B cell (primary cell): ENCODE measurements at regions of chr19 and their contacts with region 1.

Region 1: DNA sequence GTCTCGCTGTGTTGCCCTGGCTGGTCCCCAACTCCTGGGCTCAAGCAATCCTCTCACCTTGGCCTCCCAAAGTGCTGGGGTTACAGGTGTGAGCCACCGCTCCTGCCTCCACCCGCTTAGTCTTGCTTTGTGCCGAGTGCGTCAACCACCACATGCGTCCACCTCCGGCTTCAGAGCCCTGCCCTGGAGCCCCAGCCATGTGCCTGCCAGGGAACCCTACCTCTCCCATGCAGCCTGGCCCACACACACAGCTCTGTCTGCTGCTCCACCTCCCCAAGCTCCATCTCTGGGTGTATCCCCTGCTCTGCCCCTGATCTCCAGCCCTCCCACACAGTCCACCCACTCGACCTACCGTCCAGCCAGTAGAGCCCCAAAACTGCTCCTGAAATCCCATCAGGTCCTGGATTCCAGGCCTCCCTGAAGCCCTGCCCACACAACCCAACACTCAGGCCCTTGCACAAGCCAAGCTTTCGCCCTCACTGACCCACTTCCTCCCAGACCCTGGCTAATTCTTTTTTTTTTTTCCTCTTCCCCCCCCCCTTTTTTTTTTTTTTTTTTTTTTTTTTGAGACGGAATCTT is 9.6 kb downstream of the CYP2F1 start:
- DNase-seq: no peak
- ATAC-seq: no peak
- H3K4me3 ChIP-seq: no peak overlapping the region
- H3K4me3 Mint-ChIP-seq: no peak overlapping the region
- H3K27ac ChIP-seq: no peak overlapping the region
- H3K27ac Mint-ChIP-seq: no peak overlapping the region
- H3K4me1 ChIP-seq: peaks cover 6 to 16% of the 10 kb centered on the region in 2 donors
- H3K4me1 Mint-ChIP-seq: peaks cover 20% of the 10 kb centered on the region
- H3K27me3 ChIP-seq: peaks cover 0 to 3% (median 0%) of the 10 kb centered on the region in 4 experiments
- H3K27me3 Mint-ChIP-seq: peaks cover 13% of the 10 kb centered on the region
- CTCF ChIP-seq: no peak

Region 2: DNA sequence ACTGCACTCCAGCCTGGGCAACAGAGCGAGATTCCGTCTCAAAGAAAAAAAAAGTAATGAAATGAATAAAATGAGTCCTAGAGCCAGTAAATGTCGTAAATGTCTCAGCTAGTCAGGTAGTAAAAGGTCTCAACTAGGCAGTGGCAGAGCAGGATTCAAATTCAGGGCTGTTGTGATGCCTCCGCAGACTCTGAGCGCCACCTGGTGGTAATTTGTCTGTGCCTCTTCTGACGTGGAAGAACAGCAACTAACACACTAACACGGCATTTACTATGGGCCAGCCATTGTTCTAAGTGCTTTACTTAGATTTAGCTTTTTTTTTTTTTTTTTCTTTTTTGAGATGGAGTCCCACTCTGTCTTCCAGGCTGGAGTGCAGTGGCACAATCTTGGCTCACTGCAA is 20.6 kb after region 1 on chr19:
- CTCF ChIA-PET with region 1: interaction called, 38 read pairs
- POLR2A ChIA-PET with region 1: no interaction called
- intact Hi-C with region 1: loop called (anchors 1 kb)
- DNase-seq: peak; percentile 83
- ATAC-seq: peak; percentile 86
- H3K4me3 ChIP-seq: no peak overlapping the region
- H3K4me3 Mint-ChIP-seq: no peak overlapping the region
- H3K27ac ChIP-seq: no peak overlapping the region
- H3K27ac Mint-ChIP-seq: no peak overlapping the region
- H3K4me1 ChIP-seq: no peaks in the 10 kb centered on the region
- H3K4me1 Mint-ChIP-seq: no peaks in the 10 kb centered on the region
- H3K27me3 ChIP-seq: peaks cover 0 to 4% (median 3%) of the 10 kb centered on the region in 4 experiments
- H3K27me3 Mint-ChIP-seq: peaks cover 18% of the 10 kb centered on the region
- CTCF ChIP-seq: peak; percentile 79